ENCODE measurements at regions of chr13 and their contacts with region 1.

Region 1: GRCh38 chr13:48400850-48401291 is 12.0 kb downstream of the LPAR6 start:
- DNase-seq: no peak
- ATAC-seq: peak; percentile 21
- H3K4me3 Mint-ChIP-seq: no peak overlapping the region
- H3K27ac Mint-ChIP-seq: peak overlapping the region; percentile 1
- H3K4me1 Mint-ChIP-seq: peaks cover 53% of the 10 kb centered on the region
- H3K27me3 Mint-ChIP-seq: no peaks in the 10 kb centered on the region

Region 2: DNA sequence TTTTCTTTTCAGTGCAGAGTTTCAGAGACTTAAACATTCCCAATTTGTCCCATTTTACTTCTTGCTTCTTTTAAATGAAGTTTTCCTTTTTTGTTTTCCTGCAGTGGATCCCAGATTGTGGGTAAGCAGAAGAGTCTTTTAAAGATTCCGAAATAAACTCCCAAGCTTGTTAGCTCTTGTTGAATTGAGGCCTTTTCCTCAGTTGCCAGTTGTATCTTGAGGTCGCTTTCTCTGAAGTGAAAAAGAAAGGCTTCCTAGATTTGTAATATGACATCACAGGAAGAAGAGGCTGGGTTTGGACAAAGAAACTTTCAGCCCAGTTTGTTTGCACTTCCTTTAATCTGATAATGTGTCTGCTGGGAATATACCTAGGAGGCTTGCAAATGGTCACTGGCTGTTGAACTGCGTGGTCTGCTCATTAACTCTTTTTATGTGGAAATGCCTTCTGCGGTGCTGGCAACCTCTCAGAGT is 12.0 kb after region 1 on chr13 and contains the start of gene LPAR6:
- CTCF ChIA-PET with region 1: interaction called, 6 read pairs
- POLR2A ChIA-PET with region 1: no interaction called
- intact Hi-C with region 1: loop called (anchors 1 kb)
- DNase-seq: no peak
- ATAC-seq: no peak
- H3K4me3 Mint-ChIP-seq: peak within 1 kb of the TSS; percentile 99
- H3K27ac Mint-ChIP-seq: peak within 1 kb of the TSS; percentile 98
- H3K4me1 Mint-ChIP-seq: peaks cover 39% of the 10 kb centered on the region
- H3K27me3 Mint-ChIP-seq: no peaks in the 10 kb centered on the region
- total RNA-seq, gene LPAR6: 6.8 to 7.9 TPM

Region 3: GRCh38 chr13:48505597-48506091 is 104.8 kb after region 1 on chr13:
- CTCF ChIA-PET with region 1: no interaction called
- POLR2A ChIA-PET with region 1: no interaction called
- intact Hi-C with region 1: loop called (anchors 2 kb)
- DNase-seq: peak; percentile 64
- ATAC-seq: peak; percentile 71
- H3K4me3 Mint-ChIP-seq: peak overlapping the region; percentile 22
- H3K27ac Mint-ChIP-seq: peak overlapping the region; percentile 85
- H3K4me1 Mint-ChIP-seq: peaks cover 57% of the 10 kb centered on the region
- H3K27me3 Mint-ChIP-seq: no peaks in the 10 kb centered on the region

Region 4: GRCh38 chr13:48580185-48580803 is 179.4 kb after region 1 on chr13:
- CTCF ChIA-PET with region 1: interaction called, 3 read pairs
- POLR2A ChIA-PET with region 1: no interaction called
- intact Hi-C with region 1: loop called (anchors 5 kb)
- DNase-seq: peak; percentile 81
- ATAC-seq: no peak
- H3K4me3 Mint-ChIP-seq: no peak overlapping the region
- H3K27ac Mint-ChIP-seq: no peak overlapping the region
- H3K4me1 Mint-ChIP-seq: no peaks in the 10 kb centered on the region
- H3K27me3 Mint-ChIP-seq: peaks cover 16% of the 10 kb centered on the region

Measured in activated CD4-positive, alpha-beta T cell treated with anti-CD3 and anti-CD28 coated beads for 36 hours (primary cell).